ENCODE measurements at regions of chr17 and their contacts with region 1.

Region 1: GRCh38 chr17:82418001-82418986 is at the starts of genes HEXD and OGFOD3:
- DNase-seq: peak; percentile 73 to 74
- H3K4me3 ChIP-seq: peak within 1 kb of the TSS; percentile 74 to 98 (median 81)
- H3K27ac ChIP-seq: peak within 1 kb of the TSS; percentile 89 to 95
- H3K4me1 ChIP-seq: peaks cover 2 to 6% of the 10 kb centered on the region in 2 donors
- H3K27me3 ChIP-seq: no peaks in the 10 kb centered on the region
- CTCF ChIP-seq: peak in 1 of 3 donors; percentile 32
- POLR2A ChIP-seq: no peak
- total RNA-seq, gene HEXD: 48.2 to 157 (median 68.2) TPM
- total RNA-seq, gene OGFOD3: 26.3 to 32.8 (median 28.5) TPM

Region 2: DNA sequence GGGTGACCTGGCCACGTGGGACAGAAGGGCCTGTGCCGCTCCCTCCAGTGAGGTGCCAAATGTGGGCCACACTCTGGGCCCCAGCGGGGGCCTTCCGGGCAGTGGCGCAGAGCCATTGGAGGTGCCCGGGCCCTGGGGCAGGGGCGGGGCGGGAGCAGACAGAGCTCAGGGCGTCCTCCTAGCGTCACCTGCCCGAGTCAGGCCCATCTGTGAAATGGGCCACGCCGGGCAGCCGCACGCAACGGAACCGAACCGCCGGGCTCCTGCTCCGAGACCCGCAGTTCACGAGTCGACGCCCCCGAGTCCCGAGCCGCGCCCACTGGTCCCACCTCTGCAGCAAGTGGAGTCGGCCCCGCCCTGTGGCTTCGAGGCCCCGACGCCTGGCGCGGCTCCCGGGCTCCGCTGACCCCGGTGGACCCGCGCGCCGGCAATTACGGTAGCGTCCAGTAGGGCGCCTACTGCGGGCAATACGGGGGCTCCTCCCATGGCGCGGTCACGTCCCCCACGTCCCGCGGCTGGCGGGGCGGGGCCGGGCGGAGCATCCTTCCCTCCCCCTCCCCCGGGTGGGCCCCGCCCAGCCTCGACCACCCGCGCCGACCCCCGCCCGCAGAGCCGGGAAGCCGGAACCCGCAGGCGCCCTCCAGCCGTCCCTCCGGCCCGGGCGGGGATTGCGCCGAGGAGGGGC is 187.5 kb before region 1 on chr17:
- intact Hi-C with region 1: loop called (anchors 10 kb)
- DNase-seq: peak in 1 of 2 donors; percentile 62
- H3K4me3 ChIP-seq: peak overlapping the region; percentile 60 to 83 (median 61)
- H3K27ac ChIP-seq: peak overlapping the region; percentile 85 to 93
- H3K4me1 ChIP-seq: peaks cover 12 to 13% of the 10 kb centered on the region in 2 donors
- H3K27me3 ChIP-seq: peaks cover 3 to 4% of the 10 kb centered on the region in 2 donors
- CTCF ChIP-seq: peak; percentile 34 to 62 (median 38)
- POLR2A ChIP-seq: no peak

Region 3: DNA sequence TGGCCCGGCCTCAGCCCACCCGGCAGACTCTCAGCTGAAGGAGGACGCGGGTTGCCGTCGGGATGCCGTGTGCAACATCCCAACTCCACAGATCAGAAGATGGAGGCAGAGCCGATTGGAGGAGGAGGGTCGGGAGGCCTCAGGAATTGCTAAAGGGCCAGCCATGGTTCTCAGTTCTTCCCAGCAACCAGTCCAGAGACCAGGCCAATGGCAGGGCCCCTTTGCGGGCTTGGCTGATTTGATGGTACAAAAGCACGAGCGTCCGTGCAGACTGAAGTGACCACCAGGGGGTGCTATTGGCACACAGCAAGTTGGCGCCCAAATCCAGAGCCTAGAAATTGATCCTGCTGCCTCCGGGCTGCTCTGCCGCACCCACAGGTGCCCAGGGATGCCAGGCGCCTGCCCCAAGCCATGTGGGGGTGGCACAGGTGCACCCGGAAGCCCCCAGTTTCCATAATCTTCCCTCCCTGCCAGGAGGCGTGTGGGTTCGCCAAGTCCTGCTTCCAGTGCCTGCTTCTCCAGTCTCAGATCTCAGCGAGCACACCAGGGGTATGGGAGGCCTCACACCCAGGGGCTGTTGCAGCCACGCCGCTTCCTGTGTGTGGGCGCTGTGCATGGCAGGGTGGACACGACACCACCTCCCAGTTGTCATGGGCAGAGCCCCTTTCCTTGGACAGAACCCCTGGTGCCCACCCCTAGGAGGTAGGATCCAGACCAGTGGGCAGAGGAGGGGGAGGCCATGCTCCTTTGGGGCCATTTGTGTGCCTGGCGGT is 66.4 kb before region 1 on chr17:
- intact Hi-C with region 1: loop called (anchors 10 kb)
- DNase-seq: peak; percentile 73 to 82
- H3K4me3 ChIP-seq: peak overlapping the region in 1 of 3 donors; percentile 32
- H3K27ac ChIP-seq: no peak overlapping the region
- H3K4me1 ChIP-seq: peaks cover 0 to 11% of the 10 kb centered on the region in 2 donors
- H3K27me3 ChIP-seq: no peaks in the 10 kb centered on the region
- CTCF ChIP-seq: peak; percentile 92 to 97 (median 95)
- POLR2A ChIP-seq: no peak

Region 4: GRCh38 chr17:82400830-82401229 is 17.5 kb before region 1 on chr17:
- intact Hi-C with region 1: no loop called
- DNase-seq: no peak
- H3K4me3 ChIP-seq: no peak overlapping the region
- H3K27ac ChIP-seq: no peak overlapping the region
- H3K4me1 ChIP-seq: no peaks in the 10 kb centered on the region
- H3K27me3 ChIP-seq: no peaks in the 10 kb centered on the region
- CTCF ChIP-seq: no peak
- POLR2A ChIP-seq: no peak

Region 5: GRCh38 chr17:82603981-82604448 is 185.7 kb after region 1 on chr17:
- intact Hi-C with region 1: no loop called
- DNase-seq: no peak
- H3K4me3 ChIP-seq: no peak overlapping the region
- H3K27ac ChIP-seq: peak overlapping the region in 1 of 2 donors; percentile 2
- H3K4me1 ChIP-seq: no peaks in the 10 kb centered on the region
- H3K27me3 ChIP-seq: no peaks in the 10 kb centered on the region
- CTCF ChIP-seq: no peak
- POLR2A ChIP-seq: no peak

Measured in breast epithelium (tissue), 4 donors.